Head of caudate nucleus (tissue), 42 donors: ENCODE measurements at regions of chr1 and their contacts with region 1.

Region 1: DNA sequence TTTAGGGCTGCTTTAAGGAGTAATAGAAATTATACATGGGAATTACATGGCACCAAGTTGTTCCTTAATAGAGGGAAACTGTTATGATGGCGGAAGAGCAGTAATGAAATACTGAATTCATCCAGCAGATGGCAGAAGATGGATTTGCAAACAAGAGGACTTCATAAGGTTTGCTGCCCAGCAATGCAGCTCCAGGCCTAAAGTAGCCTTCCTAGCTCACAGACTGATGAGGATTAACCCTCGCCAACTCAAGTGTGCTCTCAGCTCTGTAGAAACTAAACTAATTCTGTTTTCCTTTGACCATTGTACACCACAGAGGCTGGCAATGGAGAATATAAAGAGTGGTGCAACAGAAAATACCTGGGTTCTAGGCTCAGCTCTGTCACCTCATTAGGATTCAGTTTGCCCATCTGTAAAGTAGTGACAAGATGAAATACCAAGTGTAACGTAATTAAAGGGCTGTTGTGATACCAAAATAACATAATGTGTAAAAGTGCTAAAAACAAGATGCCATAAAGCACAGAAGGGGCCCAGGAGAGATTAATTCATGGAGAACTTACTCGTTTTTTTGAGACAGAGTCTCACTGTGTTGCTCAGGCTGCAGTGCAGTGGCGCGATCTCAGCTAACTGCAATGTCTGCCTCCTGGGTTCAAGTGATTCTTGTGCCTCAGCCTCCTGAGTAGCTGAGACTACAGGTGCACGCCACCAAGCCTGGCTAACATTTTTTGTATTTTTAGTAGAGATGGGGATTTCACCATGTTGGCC is 102.4 kb upstream of the SERBP1 start:
- DNase-seq: peak in 25 of 42 donors; percentile 9 to 69 (median 31)

Region 2: DNA sequence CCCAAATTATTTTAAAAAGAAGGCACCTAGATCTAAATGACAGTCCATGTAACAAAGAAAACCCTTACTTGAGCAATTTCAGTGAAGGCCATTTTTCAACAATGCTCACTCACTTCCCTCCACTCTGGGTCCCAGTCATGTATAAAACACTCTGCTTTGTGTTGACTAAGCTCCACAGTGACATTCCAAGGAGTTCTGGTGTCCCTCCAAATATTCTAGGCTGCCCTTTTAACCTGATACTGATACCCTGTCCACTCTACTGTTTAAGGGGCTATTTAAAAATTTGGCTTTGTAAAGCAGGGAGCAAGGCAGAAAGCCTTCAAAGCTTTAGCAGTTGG is 227.0 kb after region 1 on chr1:
- intact Hi-C with region 1: loop called (anchors 2 kb)
- DNase-seq: no peak